ENCODE measurements at regions of chr7 and their contacts with region 1.

Region 1: DNA sequence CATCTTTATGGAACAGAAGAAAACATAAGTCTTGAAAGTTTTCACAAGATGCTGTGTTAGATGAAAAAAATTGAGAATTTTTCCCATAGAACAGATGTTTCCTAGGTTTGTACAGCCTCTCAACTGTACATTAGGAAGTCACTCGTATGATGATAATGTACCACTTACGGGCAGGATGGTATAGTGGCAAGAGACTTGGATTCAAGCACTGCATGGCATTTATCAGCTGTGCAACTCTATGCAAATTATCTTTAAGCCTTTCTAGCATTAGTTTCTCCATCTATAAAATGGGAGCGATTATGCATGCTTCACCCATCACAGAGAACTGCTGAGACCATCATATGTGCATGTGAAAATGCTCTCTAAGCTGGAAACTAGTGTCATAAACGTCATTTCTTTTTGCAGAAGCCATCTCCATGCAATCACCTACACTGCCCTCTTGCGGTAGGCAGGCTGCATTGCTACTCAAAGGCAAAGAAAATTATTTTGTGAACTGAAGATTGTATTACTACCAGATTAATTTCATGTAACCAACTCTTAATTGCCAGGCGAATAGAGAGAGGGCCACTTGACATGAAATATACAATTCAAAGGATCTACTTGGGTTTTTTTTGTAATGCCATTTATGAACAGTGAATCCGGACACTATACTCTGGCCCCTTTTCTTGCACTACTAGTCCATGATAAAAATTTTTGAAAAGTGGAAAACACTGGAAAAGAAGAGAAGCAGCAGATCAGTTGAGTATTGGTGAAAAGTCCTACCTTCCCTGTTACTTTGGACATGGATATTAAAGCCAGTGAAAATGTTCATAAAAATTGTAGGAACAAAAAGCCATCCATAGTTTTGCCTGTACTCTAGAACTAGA is 102.3 kb downstream of the JAZF1 start:
- DNase-seq: no peak
- H3K4me3 ChIP-seq: no peak overlapping the region
- H3K27ac ChIP-seq: no peak overlapping the region
- H3K27me3 ChIP-seq: no peaks in the 10 kb centered on the region
- CTCF ChIP-seq: peak; percentile 99

Region 2: GRCh38 chr7:28020302-28020940 is 57.8 kb before region 1 on chr7:
- CTCF ChIA-PET with region 1: interaction called, 12 read pairs
- POLR2A ChIA-PET with region 1: no interaction called
- DNase-seq: peak; percentile 46
- H3K4me3 ChIP-seq: no peak overlapping the region
- H3K27ac ChIP-seq: no peak overlapping the region
- H3K27me3 ChIP-seq: no peaks in the 10 kb centered on the region
- CTCF ChIP-seq: peak; percentile 87

Region 3: GRCh38 chr7:28052933-28053332 is 25.3 kb before region 1 on chr7:
- CTCF ChIA-PET with region 1: interaction called, 11 read pairs
- POLR2A ChIA-PET with region 1: no interaction called
- DNase-seq: no peak
- H3K4me3 ChIP-seq: no peak overlapping the region
- H3K27ac ChIP-seq: no peak overlapping the region
- H3K27me3 ChIP-seq: no peaks in the 10 kb centered on the region
- CTCF ChIP-seq: no peak

Region 4: GRCh38 chr7:28062197-28062991 is 15.9 kb before region 1 on chr7:
- CTCF ChIA-PET with region 1: interaction called, 51 read pairs
- POLR2A ChIA-PET with region 1: no interaction called
- DNase-seq: no peak
- H3K4me3 ChIP-seq: no peak overlapping the region
- H3K27ac ChIP-seq: peak overlapping the region; percentile 69
- H3K27me3 ChIP-seq: no peaks in the 10 kb centered on the region
- CTCF ChIP-seq: peak; percentile 63

Region 5: GRCh38 chr7:28088901-28089714 is 10.8 kb after region 1 on chr7:
- CTCF ChIA-PET with region 1: interaction called, 34 read pairs
- POLR2A ChIA-PET with region 1: no interaction called
- DNase-seq: no peak
- H3K4me3 ChIP-seq: no peak overlapping the region
- H3K27ac ChIP-seq: no peak overlapping the region
- H3K27me3 ChIP-seq: no peaks in the 10 kb centered on the region
- CTCF ChIP-seq: no peak